Caco-2 (cell line): ENCODE measurements at regions of chr2 and their contacts with region 1.

Region 1: DNA sequence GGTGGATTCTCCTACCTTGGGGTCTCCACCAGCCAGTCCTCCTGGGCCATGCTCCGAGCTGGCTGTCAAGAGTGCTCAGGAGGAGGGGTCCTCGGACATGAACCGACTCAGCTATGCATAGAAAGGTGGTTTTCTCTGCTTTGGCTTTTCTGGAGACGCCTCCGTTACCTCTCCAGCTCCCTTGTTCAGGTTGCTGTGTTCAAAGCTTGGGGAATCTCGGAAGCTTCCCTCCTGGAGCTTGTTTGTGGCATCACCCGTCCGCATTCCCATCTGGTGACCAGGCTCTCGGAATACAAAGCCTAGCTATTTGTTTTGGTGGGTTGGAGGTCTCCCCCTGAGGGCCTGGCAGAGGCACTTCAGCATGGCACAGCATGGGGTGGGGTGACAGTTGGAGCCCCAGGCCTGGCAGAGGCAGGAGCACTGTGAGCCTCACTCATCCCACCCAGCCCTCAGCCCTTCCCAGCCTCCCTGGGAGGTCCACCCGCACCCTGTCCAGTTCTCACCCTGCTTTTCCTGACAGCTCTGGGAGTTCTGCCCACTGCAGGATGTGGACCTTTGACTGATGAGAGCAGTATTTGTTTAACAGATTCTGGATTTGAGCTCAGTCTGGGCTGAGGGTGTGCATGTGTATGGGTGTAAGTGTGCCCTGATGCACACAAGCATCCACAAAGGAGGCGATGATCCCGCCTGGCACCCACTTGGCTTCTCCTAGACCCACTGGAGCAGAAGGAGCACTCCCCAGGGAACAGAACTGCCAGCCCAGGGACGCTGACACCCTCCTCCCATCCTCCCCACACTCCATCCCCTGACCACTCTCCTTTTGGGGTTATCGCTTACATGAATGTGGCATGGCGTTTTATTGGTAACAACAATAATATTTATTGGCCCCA is 107.3 kb upstream of the HS6ST1 start:
- DNase-seq: peak in 1 of 2 experiments; percentile 15
- H3K4me3 ChIP-seq: no peak overlapping the region
- H3K4me3 Mint-ChIP-seq: no peak overlapping the region
- H3K27ac Mint-ChIP-seq: no peak overlapping the region
- H3K4me1 ChIP-seq: no peaks in the 10 kb centered on the region
- H3K4me1 Mint-ChIP-seq: no peaks in the 10 kb centered on the region
- H3K27me3 ChIP-seq: no peaks in the 10 kb centered on the region
- H3K27me3 Mint-ChIP-seq: peaks cover 9% of the 10 kb centered on the region
- CTCF ChIP-seq: no peak

Region 2: GRCh38 chr2:128347701-128348539 is 78.1 kb before region 1 on chr2:
- CTCF ChIA-PET with region 1: no interaction called
- POLR2A ChIA-PET with region 1: no interaction called
- intact Hi-C with region 1: no loop called
- DNase-seq: no peak
- H3K4me3 ChIP-seq: no peak overlapping the region
- H3K4me3 Mint-ChIP-seq: no peak overlapping the region
- H3K27ac Mint-ChIP-seq: no peak overlapping the region
- H3K4me1 ChIP-seq: no peaks in the 10 kb centered on the region
- H3K4me1 Mint-ChIP-seq: no peaks in the 10 kb centered on the region
- H3K27me3 ChIP-seq: no peaks in the 10 kb centered on the region
- H3K27me3 Mint-ChIP-seq: no peaks in the 10 kb centered on the region
- CTCF ChIP-seq: no peak

Region 3: DNA sequence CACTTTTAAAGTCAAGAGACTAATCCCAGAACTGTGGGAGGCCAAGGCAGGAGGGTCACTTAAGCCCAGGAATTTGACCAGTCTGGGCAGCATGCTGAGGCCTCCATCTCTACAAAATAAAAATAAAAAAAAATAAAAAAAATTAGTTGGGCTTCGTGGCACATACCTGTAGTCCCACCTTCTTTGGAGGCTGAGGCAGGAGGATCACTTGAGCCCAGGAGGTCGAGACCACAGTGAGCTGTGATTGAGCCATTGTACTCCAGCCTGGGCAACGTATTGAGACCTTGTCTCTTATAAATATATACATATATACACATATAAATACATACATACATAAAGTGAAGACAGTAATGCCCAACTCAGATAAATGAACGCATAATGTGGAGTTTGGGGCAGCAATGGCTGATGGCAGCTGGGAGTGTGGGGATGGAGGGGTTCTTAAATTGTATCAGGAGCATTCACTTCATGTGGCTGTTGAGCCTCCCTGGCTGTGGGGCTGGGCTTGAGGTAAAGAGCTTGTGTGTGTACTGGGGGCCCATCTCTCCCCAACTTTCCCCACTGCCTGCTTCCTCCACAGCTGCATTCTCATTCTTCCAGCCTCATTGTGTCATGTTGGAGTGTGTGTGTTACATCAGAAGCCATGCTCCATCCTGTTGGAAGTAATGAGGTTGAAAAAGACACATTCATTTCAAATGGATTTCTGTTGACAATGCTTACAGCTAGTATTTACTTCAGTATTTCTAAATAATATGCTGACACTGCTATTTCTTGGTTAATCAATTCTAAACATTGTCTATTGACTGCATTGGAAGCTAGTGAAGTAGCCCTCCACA is 10.8 kb before region 1 on chr2:
- CTCF ChIA-PET with region 1: no interaction called
- POLR2A ChIA-PET with region 1: no interaction called
- intact Hi-C with region 1: loop called (anchors 1 kb)
- DNase-seq: no peak
- H3K4me3 ChIP-seq: no peak overlapping the region
- H3K4me3 Mint-ChIP-seq: no peak overlapping the region
- H3K27ac Mint-ChIP-seq: no peak overlapping the region
- H3K4me1 ChIP-seq: no peaks in the 10 kb centered on the region
- H3K4me1 Mint-ChIP-seq: no peaks in the 10 kb centered on the region
- H3K27me3 ChIP-seq: no peaks in the 10 kb centered on the region
- H3K27me3 Mint-ChIP-seq: no peaks in the 10 kb centered on the region
- CTCF ChIP-seq: no peak